ENCODE measurements at regions of chr19 and their contacts with region 1.

Region 1: GRCh38 chr19:47447470-47448359 is 24.0 kb downstream of the SLC8A2 start:
- DNase-seq: peak; percentile 67 to 92
- ATAC-seq: peak; percentile 54 to 72
- H3K4me3 ChIP-seq: peak overlapping the region; percentile 50
- H3K27ac ChIP-seq: peak overlapping the region; percentile 46 to 51; a peak in 5 of 6 replicates
- H3K4me1 ChIP-seq: peaks cover 26% of the 10 kb centered on the region
- CTCF ChIP-seq: no peak
- EP300 ChIP-seq: no peak
- POLR2A ChIP-seq: no peak
- RAD21 ChIP-seq: no peak

Region 2: GRCh38 chr19:47428177-47428894 is 19.4 kb before region 1 on chr19:
- CTCF ChIA-PET with region 1: interaction called, 108 read pairs
- POLR2A ChIA-PET with region 1: interaction called, 3 read pairs
- DNase-seq: peak; percentile 95 to 98
- ATAC-seq: peak; percentile 75 to 85
- H3K4me3 ChIP-seq: peak overlapping the region; percentile 42
- H3K27ac ChIP-seq: peak overlapping the region in 1 of 2 experiments; percentile 43; a peak in 2 of 6 replicates
- H3K4me1 ChIP-seq: peaks cover 20% of the 10 kb centered on the region
- CTCF ChIP-seq: no peak
- EP300 ChIP-seq: no peak
- POLR2A ChIP-seq: no peak
- RAD21 ChIP-seq: no peak

Region 3: GRCh38 chr19:47464675-47465419 is 17.1 kb after region 1 on chr19:
- CTCF ChIA-PET with region 1: no interaction called
- POLR2A ChIA-PET with region 1: no interaction called
- DNase-seq: no peak
- ATAC-seq: no peak
- H3K4me3 ChIP-seq: no peak overlapping the region
- H3K27ac ChIP-seq: no peak overlapping the region
- H3K4me1 ChIP-seq: peaks cover 7% of the 10 kb centered on the region; the same call in 1 of the 3 replicates
- CTCF ChIP-seq: no peak
- EP300 ChIP-seq: no peak
- POLR2A ChIP-seq: no peak
- RAD21 ChIP-seq: no peak

Region 4: DNA sequence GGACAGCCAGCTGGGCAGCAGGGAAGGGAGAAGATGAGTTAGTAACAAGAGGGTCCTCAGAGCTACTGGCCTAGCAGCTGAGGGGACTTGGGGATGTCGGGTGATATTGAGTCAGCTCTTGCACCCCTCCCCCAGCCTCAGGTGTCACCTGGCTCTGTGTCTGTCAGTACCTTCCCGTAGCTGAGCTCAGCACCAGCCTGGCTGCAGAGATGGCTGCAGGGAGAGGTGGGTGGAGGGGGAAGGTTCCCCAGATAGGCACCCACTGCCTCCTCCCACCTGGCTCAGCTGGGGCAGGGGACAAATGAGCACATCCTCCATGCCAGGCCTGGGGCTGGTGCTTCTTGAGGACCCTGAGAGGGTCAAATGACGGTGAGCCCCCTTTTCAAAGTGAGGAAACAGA is 43.1 kb after region 1 on chr19:
- CTCF ChIA-PET with region 1: no interaction called
- POLR2A ChIA-PET with region 1: no interaction called
- DNase-seq: no peak
- ATAC-seq: no peak
- H3K4me3 ChIP-seq: no peak overlapping the region
- H3K27ac ChIP-seq: no peak overlapping the region
- H3K4me1 ChIP-seq: no peaks in the 10 kb centered on the region
- CTCF ChIP-seq: no peak
- EP300 ChIP-seq: no peak
- POLR2A ChIP-seq: no peak
- RAD21 ChIP-seq: no peak